Posterior cingulate gyrus (tissue), 11 donors: ENCODE measurements at regions of chr16 and their contacts with region 1.

Region 1: DNA sequence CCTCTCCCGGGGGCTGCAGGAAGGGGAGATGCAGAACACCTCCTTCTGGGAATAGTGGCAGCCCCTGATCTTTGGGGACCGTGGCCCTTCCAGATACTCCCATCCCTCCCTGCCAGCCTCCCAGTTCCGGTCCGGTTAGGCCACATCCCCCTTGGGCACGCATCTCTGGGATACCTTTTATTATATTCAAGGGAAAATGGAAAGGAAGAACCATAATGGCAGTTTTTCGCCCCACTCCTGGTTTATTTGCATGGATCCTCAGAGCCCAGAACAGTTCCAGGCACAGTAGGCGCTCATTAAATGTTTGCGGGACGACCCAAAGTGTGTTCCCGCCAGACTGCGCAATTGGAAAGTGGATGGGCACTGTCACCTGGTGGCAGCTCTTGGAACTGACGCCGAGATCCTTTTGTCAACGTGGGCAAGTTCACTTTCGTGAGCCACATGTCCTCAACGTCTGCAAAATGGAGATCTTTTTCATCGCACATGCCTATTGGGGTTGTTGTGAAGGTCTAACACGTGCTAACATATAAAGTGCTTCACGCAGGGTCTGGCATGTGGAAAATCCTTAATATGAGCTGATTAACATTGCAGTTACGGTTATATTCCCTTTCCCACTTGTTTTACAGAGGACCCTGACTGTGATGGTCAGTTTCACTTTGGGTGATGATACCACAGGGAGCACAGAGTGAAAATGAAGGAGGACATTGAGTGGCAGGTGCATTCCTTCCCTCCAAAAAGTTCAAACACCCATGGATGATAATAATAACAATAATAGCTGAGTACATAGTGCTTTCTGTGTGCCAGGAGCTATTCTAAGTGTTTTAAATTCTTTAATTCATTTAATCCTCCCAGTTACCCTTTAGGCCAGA is 1.7 kb upstream of the GPRC5B start:
- DNase-seq: peak; percentile 74 to 97 (median 86)

Region 2: DNA sequence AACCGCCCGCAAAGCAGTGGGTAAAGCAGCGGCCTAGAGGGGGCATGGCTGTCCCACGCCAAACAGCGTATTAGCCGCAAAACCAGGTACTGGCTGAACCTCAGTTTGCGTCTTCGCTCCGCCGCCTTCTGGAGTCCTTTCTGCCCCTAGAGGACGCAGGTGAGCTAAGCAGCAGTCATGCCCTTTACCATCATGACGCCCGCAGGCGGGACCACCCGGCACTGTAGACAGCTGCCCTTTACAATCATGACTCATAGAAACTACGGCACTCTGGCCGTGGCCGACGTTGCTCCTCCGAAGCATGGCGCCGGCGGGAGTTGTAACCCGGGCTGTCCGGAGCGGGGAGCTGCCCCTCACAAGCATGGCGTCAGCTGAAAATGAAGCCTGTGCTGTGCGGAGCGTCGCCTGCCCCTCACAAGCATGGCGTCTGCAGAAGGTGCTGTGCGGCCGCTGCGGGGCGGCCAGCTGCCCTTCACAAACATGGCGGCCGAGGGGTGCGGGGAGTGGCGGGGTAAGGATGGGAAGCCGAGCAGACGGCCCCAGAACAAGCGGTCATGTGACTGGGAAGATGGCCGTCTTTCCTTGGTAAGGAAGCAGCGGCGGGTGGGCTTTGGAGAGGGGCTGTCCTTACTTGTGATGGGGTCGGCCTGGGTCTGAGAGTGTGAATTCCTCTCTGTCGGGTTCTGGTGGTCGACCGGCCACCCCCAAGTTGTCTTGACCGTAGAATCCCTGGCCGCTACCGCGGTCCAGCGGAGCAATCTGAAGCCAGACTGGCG is 331.0 kb before region 1 on chr16 and contains the start of gene VPS35L:
- intact Hi-C with region 1: loop called (anchors 1 kb)
- DNase-seq: peak; percentile 93 to 99 (median 96)

Region 3: DNA sequence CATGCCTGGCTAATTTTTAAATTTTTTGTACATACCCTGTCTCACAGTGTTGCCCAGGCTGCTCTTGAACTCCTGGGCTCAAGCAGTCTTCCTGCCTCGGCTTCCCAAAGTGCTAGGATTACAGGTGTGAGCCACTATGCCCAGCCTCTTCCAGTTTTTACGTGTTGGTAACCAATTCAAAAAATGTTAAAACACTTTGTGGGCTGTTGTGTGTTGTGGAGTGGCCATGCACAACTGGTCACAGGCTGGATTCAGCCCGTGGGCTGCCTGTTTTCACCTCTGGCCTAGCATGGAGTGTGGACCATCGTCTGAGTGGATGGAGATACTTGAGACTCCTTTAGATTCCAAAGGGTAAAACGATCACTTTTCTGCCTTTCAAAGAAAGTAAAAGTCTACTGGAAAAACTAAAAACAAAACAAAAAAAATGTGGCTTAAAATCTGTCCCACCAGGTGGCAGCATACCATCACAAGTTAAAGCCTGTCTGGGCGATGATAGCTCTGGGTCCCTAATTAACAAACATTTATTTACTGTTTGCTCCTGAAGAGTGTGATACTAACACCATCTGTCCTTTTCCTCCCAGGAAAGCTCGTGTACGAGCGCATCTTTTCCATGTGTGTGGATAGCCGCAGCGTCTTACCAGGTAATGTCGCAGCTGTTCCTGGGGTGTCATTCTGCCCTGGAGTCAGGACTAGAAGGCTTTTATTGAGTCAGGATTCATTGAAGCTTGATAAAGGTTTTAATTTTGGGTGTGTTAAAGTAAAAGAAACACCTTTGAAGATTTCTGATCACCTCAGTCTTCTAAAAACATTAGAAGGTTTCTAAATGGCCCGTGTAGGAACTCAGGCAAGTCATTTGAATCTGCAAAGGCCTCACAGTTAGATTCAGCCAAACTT is 285.0 kb before region 1 on chr16:
- intact Hi-C with region 1: loop called (anchors 1 kb)
- DNase-seq: peak in 4 of 10 donors; percentile 18 to 52 (median 44)

Region 4: GRCh38 chr16:19659554-19659953 is 226.8 kb before region 1 on chr16:
- intact Hi-C with region 1: loop called (anchors 5 kb)
- DNase-seq: peak in 4 of 10 donors; percentile 27 to 91 (median 52)

Region 5: DNA sequence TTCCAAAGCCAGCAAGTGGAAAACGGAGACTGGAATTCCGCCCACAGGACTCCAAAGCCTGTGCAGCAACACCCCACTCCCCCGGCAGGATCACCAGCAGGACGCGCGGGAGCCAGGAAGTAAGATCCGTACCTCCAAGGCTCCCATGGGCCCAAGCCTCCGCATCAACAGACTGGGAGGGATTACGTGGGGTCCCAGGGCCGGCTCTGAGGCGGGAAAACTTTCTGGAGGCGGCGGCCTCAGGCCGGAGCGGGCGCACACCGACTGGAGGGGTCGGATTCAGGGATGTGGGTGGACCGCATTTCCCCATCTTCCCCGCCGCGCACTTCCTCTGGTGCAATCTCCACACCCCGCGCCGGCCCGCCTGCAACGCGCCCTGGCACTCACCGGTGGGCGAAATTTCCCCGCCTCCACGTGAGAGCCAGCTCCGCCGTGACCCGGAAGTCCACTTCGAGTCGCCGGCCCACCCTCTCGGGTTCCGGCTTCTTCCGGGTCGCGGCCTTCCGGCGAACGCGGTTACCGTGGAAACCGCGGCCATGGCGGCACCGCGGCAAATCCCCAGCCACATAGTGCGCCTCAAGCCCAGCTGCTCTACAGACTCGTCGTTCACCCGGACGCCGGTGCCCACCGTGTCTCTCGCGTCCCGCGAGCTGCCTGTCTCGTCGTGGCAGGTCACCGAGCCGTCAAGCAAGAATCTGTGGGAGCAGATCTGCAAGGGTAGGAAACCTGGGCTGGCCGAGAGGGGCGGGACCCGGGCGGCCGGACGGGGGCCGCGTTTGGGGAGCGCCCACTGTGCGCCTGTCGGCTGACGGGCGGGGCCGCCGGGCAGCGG is 168.3 kb before region 1 on chr16 and contains the starts of genes IQCK and KNOP1:
- intact Hi-C with region 1: loop called (anchors 5 kb)
- DNase-seq: peak; percentile 80 to 98 (median 89)

Region 6: GRCh38 chr16:19760356-19761060 is 125.8 kb before region 1 on chr16:
- intact Hi-C with region 1: loop called (anchors 5 kb)
- DNase-seq: no peak

Region 7: GRCh38 chr16:19844945-19845641 is 41.2 kb before region 1 on chr16:
- intact Hi-C with region 1: no loop called
- DNase-seq: no peak

Region 8: GRCh38 chr16:19860166-19861041 is 25.9 kb before region 1 on chr16:
- intact Hi-C with region 1: loop called (anchors 1 kb)
- DNase-seq: peak in 1 of 10 donors; percentile 68